Activated B cell treated with CpG ODN at 0.5 μM for 24 hours (primary cell): ENCODE measurements at regions of chr6 and their contacts with region 1.

Region 1: DNA sequence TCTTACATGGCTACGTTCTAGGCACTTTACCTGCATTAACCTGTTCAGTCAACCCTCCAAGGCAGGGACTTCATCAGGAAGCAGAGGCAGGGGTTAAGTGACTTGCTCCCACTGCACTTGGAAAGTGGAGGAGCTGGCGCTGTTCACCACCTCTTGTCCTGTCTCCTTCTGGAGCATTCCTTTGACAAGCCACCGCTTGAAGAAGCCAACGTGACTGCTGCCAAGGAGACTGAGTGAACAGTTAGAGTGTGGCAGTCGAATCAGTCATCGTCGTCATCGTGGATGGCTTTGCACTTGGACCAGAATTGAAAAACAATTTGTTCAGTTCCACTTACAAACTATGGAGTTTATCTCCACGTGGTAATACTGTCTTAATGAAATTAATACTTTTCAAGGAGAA is 60.9 kb downstream of the TULP4 start:
- DNase-seq: no peak
- ATAC-seq: no peak
- H3K4me3 Mint-ChIP-seq: no peak overlapping the region
- H3K27ac Mint-ChIP-seq: no peak overlapping the region
- H3K4me1 Mint-ChIP-seq: peaks cover 8% of the 10 kb centered on the region
- H3K27me3 Mint-ChIP-seq: no peaks in the 10 kb centered on the region
- CTCF ChIP-seq: no peak

Region 2: GRCh38 chr6:158086504-158087223 is 286.6 kb before region 1 on chr6:
- CTCF ChIA-PET with region 1: no interaction called
- POLR2A ChIA-PET with region 1: no interaction called
- intact Hi-C with region 1: no loop called
- DNase-seq: no peak
- ATAC-seq: peak; percentile 40
- H3K4me3 Mint-ChIP-seq: no peak overlapping the region
- H3K27ac Mint-ChIP-seq: no peak overlapping the region
- H3K4me1 Mint-ChIP-seq: peaks cover 5% of the 10 kb centered on the region
- H3K27me3 Mint-ChIP-seq: no peaks in the 10 kb centered on the region
- CTCF ChIP-seq: no peak

Region 3: GRCh38 chr6:158338311-158339112 is 34.7 kb before region 1 on chr6:
- CTCF ChIA-PET with region 1: no interaction called
- POLR2A ChIA-PET with region 1: no interaction called
- intact Hi-C with region 1: loop called (anchors 5 kb)
- DNase-seq: no peak
- ATAC-seq: no peak
- H3K4me3 Mint-ChIP-seq: no peak overlapping the region
- H3K27ac Mint-ChIP-seq: no peak overlapping the region
- H3K4me1 Mint-ChIP-seq: peaks cover 27% of the 10 kb centered on the region
- H3K27me3 Mint-ChIP-seq: no peaks in the 10 kb centered on the region
- CTCF ChIP-seq: no peak

Region 4: GRCh38 chr6:158396136-158396535 is 22.9 kb after region 1 on chr6:
- CTCF ChIA-PET with region 1: no interaction called
- POLR2A ChIA-PET with region 1: no interaction called
- intact Hi-C with region 1: no loop called
- DNase-seq: no peak
- ATAC-seq: no peak
- H3K4me3 Mint-ChIP-seq: no peak overlapping the region
- H3K27ac Mint-ChIP-seq: no peak overlapping the region
- H3K4me1 Mint-ChIP-seq: peaks cover 10% of the 10 kb centered on the region
- H3K27me3 Mint-ChIP-seq: no peaks in the 10 kb centered on the region
- CTCF ChIP-seq: no peak